Panc1 (cell line): ENCODE measurements at regions of chr20 and their contacts with region 1.

Region 1: DNA sequence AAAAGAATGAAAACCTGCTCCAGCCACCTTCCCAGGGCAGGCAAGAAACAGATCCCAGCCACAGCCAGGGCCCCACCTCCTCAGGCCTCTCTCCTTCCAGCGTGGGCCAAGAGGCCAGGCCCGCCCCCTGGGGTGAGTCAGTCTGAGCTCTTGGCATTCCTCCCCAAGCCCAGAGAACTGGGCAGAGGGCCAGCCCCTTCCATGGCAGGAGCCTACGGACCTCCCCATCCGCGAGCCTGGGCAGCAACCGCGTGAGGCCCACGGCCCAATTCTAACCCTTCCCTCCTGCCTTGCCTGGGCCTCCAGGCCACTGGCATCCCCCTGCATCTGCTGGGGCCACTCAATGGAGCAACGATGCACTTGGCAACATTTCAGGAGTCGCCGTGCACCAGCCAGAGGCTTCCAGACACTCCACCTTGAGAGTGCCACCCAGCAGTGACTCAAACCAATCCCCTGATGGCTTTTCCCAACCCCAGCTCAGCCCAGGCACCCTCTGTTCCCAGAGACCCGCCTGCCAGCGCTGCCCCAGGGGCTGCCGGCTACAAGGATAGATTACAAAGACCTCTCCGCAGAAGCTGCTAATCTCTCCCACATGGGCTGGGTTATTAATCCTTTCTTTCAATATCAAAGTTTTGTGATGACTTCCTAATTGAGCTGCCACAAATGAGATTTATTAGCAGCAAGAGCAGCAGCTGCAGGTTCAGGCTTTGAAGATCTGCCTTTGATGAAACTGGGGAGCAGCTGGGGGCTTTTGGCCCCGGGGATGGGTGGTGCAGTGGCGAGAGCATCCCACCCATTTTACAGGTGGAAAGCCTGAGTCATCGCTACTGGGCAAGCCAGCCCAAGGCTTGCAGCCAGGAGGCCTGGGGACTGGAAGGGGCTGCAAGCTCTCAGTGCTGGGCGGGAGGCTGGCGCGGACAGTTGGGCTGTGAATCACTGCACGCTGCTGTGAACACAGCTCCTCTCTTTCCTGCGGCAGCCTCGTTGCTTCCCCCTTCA is 85.7 kb downstream of the NFATC2 start:
- DNase-seq: peak; percentile 89
- ATAC-seq: peak; percentile 94
- H3K4me3 ChIP-seq: peak overlapping the region; percentile 23 to 55
- H3K27ac ChIP-seq: peak overlapping the region; percentile 97
- H3K4me1 ChIP-seq: peaks cover 42% of the 10 kb centered on the region
- H3K27me3 ChIP-seq: no peaks in the 10 kb centered on the region
- CTCF ChIP-seq: no peak

Region 2: DNA sequence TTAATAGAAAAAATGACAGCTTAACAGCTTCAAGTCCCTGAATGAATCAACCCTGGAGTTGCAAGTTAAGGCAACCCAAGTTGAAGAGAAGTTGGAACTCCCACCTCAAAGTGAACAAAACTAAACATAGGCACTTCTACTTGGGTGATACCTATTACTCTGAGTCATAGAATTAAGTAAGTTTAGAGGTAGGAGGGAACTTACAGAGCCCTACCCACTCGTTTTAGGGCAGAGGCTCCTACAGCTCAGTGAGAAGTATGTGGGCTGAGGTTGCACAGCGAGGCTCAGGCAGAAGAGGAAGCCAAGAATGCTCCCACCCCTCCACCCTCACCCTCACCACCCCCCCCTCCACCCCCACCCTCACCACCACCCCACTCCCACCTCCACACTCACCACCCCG is 43.5 kb after region 1 on chr20:
- CTCF ChIA-PET with region 1: no interaction called
- POLR2A ChIA-PET with region 1: no interaction called
- in situ Hi-C with region 1: no loop called
- intact Hi-C with region 1: no loop called
- DNase-seq: no peak
- ATAC-seq: no peak
- H3K4me3 ChIP-seq: no peak overlapping the region
- H3K27ac ChIP-seq: peak overlapping the region; percentile 26; the same call in 1 of the 2 replicates
- H3K4me1 ChIP-seq: peaks cover 19% of the 10 kb centered on the region
- H3K27me3 ChIP-seq: no peaks in the 10 kb centered on the region
- CTCF ChIP-seq: no peak

Region 3: GRCh38 chr20:51562332-51563155 is 105.7 kb after region 1 on chr20:
- CTCF ChIA-PET with region 1: interaction called, 4 read pairs
- POLR2A ChIA-PET with region 1: interaction called, 6 read pairs
- in situ Hi-C with region 1: no loop called
- intact Hi-C with region 1: loop called (anchors 10 kb)
- DNase-seq: peak; percentile 55
- ATAC-seq: peak; percentile 68
- H3K4me3 ChIP-seq: peak overlapping the region; percentile 53 to 92
- H3K27ac ChIP-seq: peak overlapping the region; percentile 93
- H3K4me1 ChIP-seq: peaks cover 36% of the 10 kb centered on the region
- H3K27me3 ChIP-seq: no peaks in the 10 kb centered on the region
- CTCF ChIP-seq: peak; percentile 73